Endothelial cell of umbilical vein (primary cell): ENCODE measurements at regions of chr15 and their contacts with region 1.

Region 1: GRCh38 chr15:57827021-57827420 is 120.5 kb downstream of the POLR2M start:
- DNase-seq: peak; percentile 77
- H3K4me3 ChIP-seq: no peak overlapping the region
- H3K27ac ChIP-seq: no peak overlapping the region
- H3K4me1 ChIP-seq: peaks cover 29% of the 10 kb centered on the region
- H3K27me3 ChIP-seq: no peaks in the 10 kb centered on the region
- CTCF ChIP-seq: no peak
- POLR2A ChIP-seq: no peak

Region 2: DNA sequence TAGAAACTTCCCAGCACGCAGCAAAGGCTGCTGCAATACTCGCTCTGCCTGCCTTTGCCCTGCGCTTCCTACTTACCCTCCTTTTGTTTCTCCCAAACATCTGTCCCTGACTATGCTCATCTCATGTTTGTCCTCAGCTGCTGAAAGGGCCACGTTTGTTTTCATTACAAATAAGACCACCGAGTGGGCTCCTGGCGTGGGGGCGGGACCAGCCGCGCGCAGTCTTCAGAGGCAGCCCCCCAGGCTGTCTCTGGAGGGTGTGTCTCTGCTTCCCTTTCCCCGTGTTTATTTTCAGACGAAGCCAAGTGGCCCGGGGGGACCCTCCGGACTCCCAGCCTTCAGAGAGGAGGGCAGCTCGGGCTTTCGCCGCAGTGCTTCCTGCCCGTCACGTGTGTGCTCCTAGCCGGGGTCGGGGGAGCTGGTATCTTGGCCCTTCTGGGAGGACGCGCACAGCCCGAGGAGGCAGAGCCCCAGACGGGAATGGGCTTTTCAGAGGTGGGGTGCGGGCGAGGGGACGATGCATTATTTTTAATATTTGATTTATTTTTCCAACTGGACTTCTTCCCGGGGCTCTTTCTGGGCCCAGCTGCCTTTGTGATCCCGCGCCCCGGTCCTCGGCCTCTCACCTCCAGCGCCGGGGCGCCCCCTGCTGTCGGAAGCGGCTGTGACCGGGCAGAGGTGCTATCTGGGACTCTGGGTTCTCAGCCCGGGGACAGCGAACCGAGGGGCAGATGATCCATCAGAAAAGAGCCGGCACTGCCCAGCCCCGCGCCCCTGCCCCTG is 520.7 kb before region 1 on chr15:
- CTCF ChIA-PET with region 1: no interaction called
- POLR2A ChIA-PET with region 1: no interaction called
- dilution Hi-C with region 1: no loop called
- intact Hi-C with region 1: no loop called
- DNase-seq: peak; percentile 53
- H3K4me3 ChIP-seq: peak overlapping the region; percentile 33 to 39 (median 35)
- H3K27ac ChIP-seq: peak overlapping the region; percentile 32
- H3K4me1 ChIP-seq: peaks cover 11% of the 10 kb centered on the region
- H3K27me3 ChIP-seq: no peaks in the 10 kb centered on the region
- CTCF ChIP-seq: peak; percentile 90 to 91
- POLR2A ChIP-seq: no peak

Region 3: DNA sequence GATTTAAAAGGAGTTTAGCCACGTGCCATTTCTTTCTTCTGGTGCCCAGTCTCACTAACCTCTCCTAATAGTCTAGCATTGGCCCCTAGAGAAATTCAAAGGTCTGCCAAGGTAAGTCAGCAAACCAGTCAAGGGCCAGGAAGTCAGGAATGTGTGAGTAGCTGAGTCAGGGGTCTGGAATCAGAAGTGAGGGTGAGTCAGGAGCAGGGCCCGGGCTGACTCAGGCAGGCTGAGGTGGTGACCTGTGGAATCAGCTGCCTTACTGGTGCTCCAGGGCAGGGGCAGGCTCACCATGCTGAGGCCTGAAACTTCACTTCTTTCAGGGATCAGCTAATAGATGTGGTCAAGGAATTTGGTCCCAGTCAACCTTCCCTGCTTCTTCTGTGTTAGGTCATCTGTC is 341.2 kb before region 1 on chr15:
- CTCF ChIA-PET with region 1: no interaction called
- POLR2A ChIA-PET with region 1: no interaction called
- dilution Hi-C with region 1: no loop called
- intact Hi-C with region 1: no loop called
- DNase-seq: peak; percentile 82
- H3K4me3 ChIP-seq: no peak overlapping the region
- H3K27ac ChIP-seq: peak overlapping the region; percentile 56
- H3K4me1 ChIP-seq: peaks cover 22% of the 10 kb centered on the region
- H3K27me3 ChIP-seq: no peaks in the 10 kb centered on the region
- CTCF ChIP-seq: no peak
- POLR2A ChIP-seq: no peak

Region 4: GRCh38 chr15:57743424-57743823 is 83.6 kb before region 1 on chr15:
- CTCF ChIA-PET with region 1: no interaction called
- POLR2A ChIA-PET with region 1: no interaction called
- dilution Hi-C with region 1: no loop called
- intact Hi-C with region 1: no loop called
- DNase-seq: peak; percentile 12
- H3K4me3 ChIP-seq: no peak overlapping the region
- H3K27ac ChIP-seq: no peak overlapping the region
- H3K4me1 ChIP-seq: no peaks in the 10 kb centered on the region
- H3K27me3 ChIP-seq: no peaks in the 10 kb centered on the region
- CTCF ChIP-seq: peak in 1 of 2 donors; percentile 29
- POLR2A ChIP-seq: no peak

Region 5: GRCh38 chr15:57789225-57789624 is 37.8 kb before region 1 on chr15:
- CTCF ChIA-PET with region 1: no interaction called
- POLR2A ChIA-PET with region 1: no interaction called
- dilution Hi-C with region 1: no loop called
- intact Hi-C with region 1: loop called (anchors 5 kb)
- DNase-seq: peak; percentile 39
- H3K4me3 ChIP-seq: no peak overlapping the region
- H3K27ac ChIP-seq: no peak overlapping the region
- H3K4me1 ChIP-seq: peaks cover 16% of the 10 kb centered on the region
- H3K27me3 ChIP-seq: no peaks in the 10 kb centered on the region
- CTCF ChIP-seq: no peak
- POLR2A ChIP-seq: no peak

Region 6: DNA sequence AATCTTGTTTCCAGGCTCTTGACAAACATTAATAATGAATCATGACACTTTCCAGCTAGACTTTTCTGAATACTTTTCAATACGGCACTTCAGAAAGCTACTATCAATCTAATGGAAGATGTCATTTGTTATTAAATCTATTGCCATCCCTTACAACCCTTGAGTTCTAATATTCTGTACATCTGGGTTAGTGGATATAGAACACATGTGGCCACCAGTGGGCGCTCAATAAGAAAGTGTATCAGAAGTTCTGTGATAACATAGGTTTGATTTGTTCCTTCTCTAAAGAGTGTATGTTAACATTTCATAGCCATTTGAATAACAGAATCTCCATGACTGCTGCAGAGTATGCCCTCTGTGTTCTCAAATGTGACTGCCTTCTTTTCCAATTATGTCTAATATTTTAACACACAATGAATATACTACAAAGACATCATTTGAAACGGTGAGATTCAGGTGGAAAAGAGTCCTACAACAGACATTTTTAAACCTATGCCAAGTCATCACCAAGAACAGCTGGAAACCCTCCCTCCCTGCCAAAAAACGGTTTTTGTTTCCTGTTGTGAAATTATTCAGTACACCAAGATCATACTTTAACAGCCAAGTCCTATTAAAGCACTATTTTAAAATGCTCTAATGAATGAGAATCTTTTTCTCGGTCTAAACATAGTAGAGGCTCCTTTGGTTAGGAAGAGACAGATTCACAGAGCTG is 216.3 kb after region 1 on chr15:
- CTCF ChIA-PET with region 1: no interaction called
- POLR2A ChIA-PET with region 1: no interaction called
- dilution Hi-C with region 1: no loop called
- intact Hi-C with region 1: no loop called
- DNase-seq: peak; percentile 65
- H3K4me3 ChIP-seq: no peak overlapping the region
- H3K27ac ChIP-seq: no peak overlapping the region
- H3K4me1 ChIP-seq: peaks cover 26% of the 10 kb centered on the region
- H3K27me3 ChIP-seq: no peaks in the 10 kb centered on the region
- CTCF ChIP-seq: peak; percentile 52 to 55
- POLR2A ChIP-seq: no peak